GM12878 (cell line): ENCODE measurements at regions of chr1 and their contacts with region 1.

Region 1: DNA sequence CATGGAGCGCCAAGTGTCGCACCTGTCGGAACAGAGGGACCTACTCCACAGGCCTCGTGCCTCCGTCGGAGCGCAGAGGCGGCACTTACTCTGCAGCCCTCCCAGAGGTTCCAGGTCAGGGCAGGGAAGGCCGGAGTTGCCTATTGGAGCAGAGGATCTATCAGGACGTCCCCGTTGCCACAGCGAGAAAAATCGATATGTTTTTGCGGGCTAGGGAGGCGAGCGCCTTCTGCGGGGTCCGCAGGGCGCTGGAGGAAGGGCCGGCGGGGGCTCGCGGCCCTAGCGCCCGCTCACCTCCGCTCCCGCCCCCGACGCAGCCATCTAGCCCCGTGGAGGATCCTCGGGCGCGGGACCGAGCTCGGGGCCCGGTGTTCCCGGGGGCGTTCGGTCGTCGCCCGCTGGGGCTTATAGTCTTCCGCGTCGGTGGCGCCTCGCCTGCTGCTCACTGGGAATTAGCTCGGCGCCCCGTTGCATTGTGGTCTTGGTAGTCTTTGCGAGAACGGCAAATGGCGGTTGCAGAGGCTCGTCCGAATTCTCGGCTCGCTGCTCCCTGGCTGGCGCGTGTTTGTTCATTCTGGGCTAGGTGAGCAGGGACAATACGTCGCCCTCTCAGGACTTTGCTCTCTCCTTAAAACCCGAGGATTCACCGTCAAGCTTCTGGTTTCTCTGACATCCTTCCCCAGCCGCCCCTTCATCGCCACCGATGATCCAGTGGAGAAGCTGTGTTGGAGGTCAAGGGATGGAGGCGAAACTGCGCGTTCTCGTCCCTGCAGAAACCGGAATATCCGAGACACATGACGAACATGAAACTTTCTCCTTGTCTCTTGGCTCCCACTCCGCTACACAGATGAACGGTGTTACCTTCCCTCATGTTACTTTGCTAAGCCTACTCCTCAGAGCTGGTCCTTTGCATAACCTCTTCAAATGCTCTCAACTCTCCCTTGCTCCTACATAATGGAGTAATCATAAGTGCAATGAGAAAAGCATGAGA is at the start of gene JTB:
- DNase-seq: no peak
- ATAC-seq: peak; percentile 95
- H3K4me3 ChIP-seq: peak within 1 kb of the TSS; percentile 87
- H3K27ac ChIP-seq: peak within 1 kb of the TSS; percentile 86
- H3K4me1 ChIP-seq: peaks cover 7% of the 10 kb centered on the region
- H3K27me3 ChIP-seq: no peaks in the 10 kb centered on the region
- CTCF ChIP-seq: no peak
- EP300 ChIP-seq: no peak
- POLR2A ChIP-seq: peak; percentile 95
- RAD21 ChIP-seq: no peak
- polyA plus RNA-seq, gene JTB: 25.0 to 67.7 TPM

Region 2: GRCh38 chr1:153796791-153797659 is 180.5 kb before region 1 on chr1:
- CTCF ChIA-PET with region 1: interaction called, 11 read pairs
- POLR2A ChIA-PET with region 1: interaction called, 6 read pairs
- RAD21 ChIA-PET with region 1: interaction called, 5 read pairs
- SMC1A ChIA-PET with region 1: interaction called, 8 read pairs
- in situ Hi-C with region 1: loop called (anchors 10 kb)
- intact Hi-C with region 1: no loop called
- DNase-seq: no peak
- ATAC-seq: peak; percentile 93
- H3K4me3 ChIP-seq: no peak overlapping the region
- H3K27ac ChIP-seq: no peak overlapping the region
- H3K4me1 ChIP-seq: peaks cover 6% of the 10 kb centered on the region
- H3K27me3 ChIP-seq: no peaks in the 10 kb centered on the region
- CTCF ChIP-seq: peak; percentile 81 to 90 (median 86)
- EP300 ChIP-seq: no peak
- POLR2A ChIP-seq: no peak
- RAD21 ChIP-seq: peak; percentile 88

Region 3: DNA sequence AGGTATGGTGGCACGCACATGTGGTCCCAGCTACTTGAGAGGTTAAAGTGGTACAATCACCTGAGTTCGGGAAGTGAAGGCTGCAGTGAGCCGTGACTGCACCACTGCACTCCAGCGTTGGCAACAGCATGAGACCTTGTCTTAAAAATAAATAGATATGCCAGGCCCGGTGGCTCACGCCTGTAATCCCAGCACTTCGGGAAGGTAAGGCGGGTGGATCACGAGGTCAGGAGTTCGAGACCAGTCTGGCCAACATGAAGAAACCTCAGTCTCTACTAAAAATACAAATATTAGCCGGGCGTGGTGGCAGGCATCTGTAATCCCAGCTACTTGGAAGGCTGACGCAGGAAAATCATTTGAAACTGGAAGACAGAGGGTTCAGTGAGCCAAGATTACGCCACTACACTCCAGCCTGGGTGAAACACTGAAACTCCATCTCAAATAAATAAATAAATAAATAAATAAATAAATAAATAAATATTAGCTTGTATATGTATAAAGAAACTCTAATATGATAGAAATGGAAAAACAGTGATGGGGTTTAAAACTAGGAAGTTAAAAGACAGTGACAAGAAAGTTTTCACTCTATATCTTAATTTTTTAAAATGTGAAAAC is 73.6 kb before region 1 on chr1:
- CTCF ChIA-PET with region 1: no interaction called
- POLR2A ChIA-PET with region 1: interaction called, 10 read pairs
- RAD21 ChIA-PET with region 1: no interaction called
- SMC1A ChIA-PET with region 1: no interaction called
- in situ Hi-C with region 1: no loop called
- intact Hi-C with region 1: no loop called
- DNase-seq: no peak
- ATAC-seq: no peak
- H3K4me3 ChIP-seq: no peak overlapping the region
- H3K27ac ChIP-seq: no peak overlapping the region
- H3K4me1 ChIP-seq: peaks cover 5% of the 10 kb centered on the region; the same call in 1 of the 2 replicates
- H3K27me3 ChIP-seq: no peaks in the 10 kb centered on the region
- CTCF ChIP-seq: no peak
- EP300 ChIP-seq: no peak
- POLR2A ChIP-seq: no peak
- RAD21 ChIP-seq: no peak

Region 4: DNA sequence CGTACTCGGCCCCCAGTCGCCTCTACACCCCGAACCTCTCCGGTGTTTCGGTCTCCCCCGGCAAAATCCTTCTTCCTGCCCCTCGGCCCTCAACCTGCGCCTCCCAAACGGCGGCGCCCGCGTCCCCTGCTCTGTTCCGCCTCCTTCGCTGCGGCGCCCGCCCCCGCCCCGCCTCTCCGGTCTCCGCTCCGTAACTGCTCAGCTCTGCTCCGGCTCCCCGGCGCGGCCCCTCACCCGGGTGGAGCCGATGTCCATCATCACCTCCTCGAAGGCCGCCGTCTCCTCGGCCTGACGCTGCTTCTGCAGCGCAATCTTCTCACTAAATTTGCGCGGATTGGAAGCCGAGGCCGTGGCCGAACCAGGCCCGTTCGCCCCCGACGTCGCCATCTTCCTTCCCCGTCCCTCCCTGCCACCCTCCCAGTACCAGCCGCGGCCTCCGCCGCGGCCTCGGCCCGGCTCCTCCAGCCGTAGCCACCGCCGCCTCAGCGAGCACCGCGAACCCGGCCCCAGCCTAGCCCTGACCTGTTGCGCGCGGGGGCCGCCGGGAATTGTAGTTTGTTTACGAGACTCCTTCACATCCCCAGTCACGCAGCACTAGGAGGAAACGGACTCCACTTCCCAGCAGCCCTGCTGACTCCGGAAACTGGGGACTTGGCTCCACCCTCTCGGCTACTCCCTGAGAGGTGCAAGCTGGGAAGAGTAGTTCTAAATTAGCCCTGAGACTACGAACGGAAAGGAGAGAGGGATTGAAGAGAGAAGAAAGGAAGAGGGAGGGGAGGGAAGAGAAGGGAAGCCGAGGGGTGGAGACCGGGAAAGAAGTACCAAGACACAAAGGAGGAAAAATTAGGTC is 19.2 kb before region 1 on chr1 and contains the start of gene CRTC2:
- CTCF ChIA-PET with region 1: interaction called, 25 read pairs
- POLR2A ChIA-PET with region 1: interaction called, 132 read pairs
- RAD21 ChIA-PET with region 1: interaction called, 12 read pairs
- SMC1A ChIA-PET with region 1: interaction called, 82 read pairs
- in situ Hi-C with region 1: no loop called
- intact Hi-C with region 1: no loop called
- DNase-seq: peak; percentile 91
- ATAC-seq: peak; percentile 86
- H3K4me3 ChIP-seq: peak within 1 kb of the TSS; percentile 89
- H3K27ac ChIP-seq: peak within 1 kb of the TSS; percentile 93
- H3K4me1 ChIP-seq: peaks cover 14% of the 10 kb centered on the region; the same call in 1 of the 2 replicates
- H3K27me3 ChIP-seq: no peaks in the 10 kb centered on the region
- CTCF ChIP-seq: 0 out of 6 replicates have a peak, but pooled peaks of 1 of the 3 experiments have one; percentile 4
- EP300 ChIP-seq: 0 out of 4 replicates have a peak, but pooled peaks of 1 of the 2 experiments have one; percentile 29
- POLR2A ChIP-seq: peak; percentile 76
- RAD21 ChIP-seq: no peak
- polyA plus RNA-seq, gene CRTC2: 5.1 to 8.4 TPM